ENCODE measurements at regions of chr9 and their contacts with region 1.

Region 1: DNA sequence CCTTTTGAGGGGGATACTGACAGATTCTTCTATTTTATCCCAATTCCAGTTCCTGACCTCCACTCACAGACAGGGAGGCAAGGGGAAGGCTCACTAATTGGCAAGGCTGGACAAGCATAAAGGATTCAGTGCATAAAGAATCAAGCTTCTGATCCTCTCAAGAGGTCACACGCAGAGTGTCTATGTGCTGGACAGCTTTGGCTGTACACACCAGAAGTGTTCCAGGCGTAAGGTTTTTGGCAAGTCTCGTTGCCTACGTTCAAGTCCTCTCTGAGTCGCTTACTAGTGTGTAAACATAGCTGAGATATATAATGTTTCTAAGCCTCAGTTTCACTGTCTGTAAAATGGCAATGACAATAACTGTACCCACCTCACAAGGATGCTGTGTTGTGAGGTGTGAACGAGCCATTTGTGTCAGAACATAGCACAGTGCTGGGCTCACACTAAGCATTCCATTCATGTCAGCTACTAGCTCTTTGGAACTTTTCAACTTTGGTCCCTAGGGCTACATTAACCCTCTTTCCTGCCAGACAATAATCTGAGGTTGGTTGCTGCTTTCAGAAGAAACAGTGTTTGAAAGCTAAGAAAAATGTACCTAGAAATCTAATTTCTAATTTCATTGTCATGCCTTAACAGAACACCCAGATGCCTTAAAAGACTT is 52.1 kb downstream of the PALM2AKAP2 start:
- DNase-seq: peak; percentile 26
- ATAC-seq: peak; percentile 70 to 83

Region 2: DNA sequence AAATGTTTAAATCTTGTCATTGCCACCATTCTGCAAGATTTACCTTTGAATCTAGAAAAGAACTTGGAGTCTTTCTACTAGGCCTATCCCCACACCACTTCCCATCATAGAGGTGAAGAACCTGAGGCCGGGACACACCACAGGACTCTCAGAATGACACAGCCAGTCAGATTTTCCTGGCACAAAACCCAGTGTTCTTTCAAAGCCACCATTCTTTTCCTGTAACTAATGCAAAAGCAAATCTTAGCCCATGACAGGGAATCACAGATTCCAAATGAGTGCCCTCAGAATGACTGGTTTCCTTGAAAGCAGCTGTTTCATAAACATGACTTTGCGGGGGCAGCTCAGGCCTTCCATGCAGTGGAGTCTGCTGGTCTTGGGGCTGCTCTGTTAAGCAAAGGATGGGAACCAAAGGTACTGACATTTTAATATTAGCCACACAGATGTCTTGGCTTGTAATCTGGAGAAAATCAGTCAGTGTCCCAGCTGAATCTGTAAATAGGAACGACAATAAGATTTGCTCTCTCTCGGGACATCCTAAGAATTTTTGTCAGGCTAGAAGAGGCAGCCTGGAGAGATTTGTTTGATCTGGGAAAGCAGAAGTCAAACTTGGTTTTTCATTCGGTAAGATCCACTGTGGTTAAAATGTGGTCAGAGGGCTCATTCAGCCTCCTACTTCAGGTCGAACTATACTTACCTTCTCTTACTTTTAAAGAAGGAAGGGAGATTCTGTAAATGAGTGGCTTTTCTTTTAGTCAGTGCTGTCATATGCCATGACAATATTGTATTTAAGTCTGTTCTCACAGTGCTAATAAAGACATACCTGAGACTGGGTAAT is 63.0 kb after region 1 on chr9:
- intact Hi-C with region 1: loop called in 1 of 2 experiments (anchors 10 kb)
- DNase-seq: no peak
- ATAC-seq: peak in 1 of 2 donors; percentile 55

Measured in left cardiac atrium (tissue), 4 donors.